ENCODE measurements at regions of chr16 and their contacts with region 1.

Region 1: GRCh38 chr16:30417529-30418349 is 10.3 kb downstream of the ZNF771 start:
- DNase-seq: peak; percentile 85 to 98
- ATAC-seq: peak; percentile 86 to 97 (median 88)
- H3K4me3 ChIP-seq: peak overlapping the region; percentile 40
- H3K4me3 Mint-ChIP-seq: peak overlapping the region; percentile 67
- H3K27ac ChIP-seq: peak overlapping the region; percentile 77
- H3K27ac Mint-ChIP-seq: peak overlapping the region; percentile 51 to 81
- H3K4me1 ChIP-seq: peaks cover 13% of the 10 kb centered on the region
- H3K4me1 Mint-ChIP-seq: peaks cover 11 to 14% of the 10 kb centered on the region in 2 donors
- H3K27me3 ChIP-seq: no peaks in the 10 kb centered on the region
- H3K27me3 Mint-ChIP-seq: no peaks in the 10 kb centered on the region
- CTCF ChIP-seq: no peak

Region 2: DNA sequence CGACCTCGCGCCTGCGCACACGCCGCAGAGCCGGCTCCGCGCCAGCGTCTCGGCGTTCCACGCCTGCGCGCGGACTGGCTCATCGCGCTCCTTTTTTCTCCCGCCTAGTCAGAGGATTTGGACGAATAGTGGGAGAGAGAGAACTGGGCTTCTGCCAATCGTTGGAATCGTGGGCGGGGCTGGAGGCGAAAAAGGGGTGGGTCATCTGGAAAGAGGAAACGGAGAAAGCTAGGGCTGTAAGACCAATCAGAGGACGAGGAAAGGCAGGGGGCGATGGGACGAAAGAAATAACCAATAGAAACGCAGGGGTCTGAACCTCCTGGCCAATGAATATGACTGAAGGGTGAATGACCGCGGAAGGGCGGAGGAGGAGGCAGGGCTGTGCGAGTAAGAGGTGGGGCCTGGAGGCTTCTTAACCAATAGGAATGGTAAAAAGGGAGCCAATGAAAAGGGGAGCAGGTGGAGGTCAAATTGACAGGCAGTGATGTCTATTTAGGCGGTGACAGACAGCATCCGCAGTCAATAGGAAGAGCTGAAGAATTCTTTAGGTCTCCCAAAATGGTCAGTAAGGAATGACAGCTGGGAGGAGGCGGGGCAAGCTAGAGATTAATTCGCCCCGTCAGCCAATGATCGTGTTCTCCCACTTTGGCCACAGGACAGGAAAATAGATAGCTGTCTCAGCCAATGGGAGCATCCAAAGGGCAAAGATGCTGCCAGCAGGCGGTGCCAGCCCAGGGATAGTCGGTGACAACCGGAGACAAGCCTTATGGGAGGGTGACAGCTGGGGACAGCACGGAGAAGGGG is 47.1 kb before region 1 on chr16 and contains the start of gene TBC1D10B:
- intact Hi-C with region 1: loop called (anchors 5 kb)
- DNase-seq: peak; percentile 96 to 99
- ATAC-seq: peak; percentile 82 to 94 (median 82)
- H3K4me3 ChIP-seq: peak within 1 kb of the TSS; percentile 64
- H3K4me3 Mint-ChIP-seq: peak within 1 kb of the TSS; percentile 93
- H3K27ac ChIP-seq: peak within 1 kb of the TSS; percentile 70
- H3K27ac Mint-ChIP-seq: peak within 1 kb of the TSS; percentile 91 to 94
- H3K4me1 ChIP-seq: peaks cover 35% of the 10 kb centered on the region
- H3K4me1 Mint-ChIP-seq: peaks cover 48 to 59% of the 10 kb centered on the region in 2 donors
- H3K27me3 ChIP-seq: no peaks in the 10 kb centered on the region
- H3K27me3 Mint-ChIP-seq: peaks cover 0 to 3% of the 10 kb centered on the region in 2 donors
- CTCF ChIP-seq: no peak
- total RNA-seq, gene TBC1D10B: 43.0 to 55.3 (median 50.2) TPM

Region 3: GRCh38 chr16:30609926-30610839 is 192.4 kb after region 1 on chr16 and contains the start of gene ZNF689:
- intact Hi-C with region 1: no loop called
- DNase-seq: peak; percentile 96 to 98
- ATAC-seq: peak; percentile 90 to 93 (median 92)
- H3K4me3 ChIP-seq: peak within 1 kb of the TSS; percentile 62
- H3K4me3 Mint-ChIP-seq: peak within 1 kb of the TSS; percentile 96
- H3K27ac ChIP-seq: peak within 1 kb of the TSS; percentile 82
- H3K27ac Mint-ChIP-seq: peak within 1 kb of the TSS; percentile 91 to 96
- H3K4me1 ChIP-seq: peaks cover 17% of the 10 kb centered on the region
- H3K4me1 Mint-ChIP-seq: peaks cover 5 to 14% of the 10 kb centered on the region in 2 donors
- H3K27me3 ChIP-seq: no peaks in the 10 kb centered on the region
- H3K27me3 Mint-ChIP-seq: no peaks in the 10 kb centered on the region
- CTCF ChIP-seq: no peak
- total RNA-seq, gene ZNF689: 8.8 to 9.3 (median 9.1) TPM